ENCODE measurements at regions of chr18 and their contacts with region 1.

Region 1: DNA sequence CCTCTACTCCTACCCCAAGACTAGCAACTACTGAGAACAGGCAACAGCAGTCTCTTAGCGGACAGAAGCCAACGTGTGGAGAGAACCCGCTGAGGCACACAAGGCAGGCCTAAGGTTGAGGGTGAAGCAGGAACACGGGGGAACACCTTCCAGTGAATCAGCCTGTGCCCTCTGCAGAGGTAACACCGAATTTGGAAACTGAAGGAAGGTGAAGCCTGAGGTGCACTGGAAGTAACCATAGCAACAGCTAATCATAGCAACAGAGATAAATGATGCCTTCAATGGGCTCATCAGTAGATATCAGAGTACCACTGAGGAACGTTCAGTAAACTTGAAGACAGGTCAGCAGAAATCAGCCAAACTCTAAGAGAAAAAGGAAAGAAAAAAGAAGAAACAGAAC is 43.3 kb downstream of the OSBPL1A start:
- DNase-seq: no peak
- H3K4me3 Mint-ChIP-seq: no peak overlapping the region
- H3K27ac Mint-ChIP-seq: no peak overlapping the region
- H3K4me1 Mint-ChIP-seq: no peaks in the 10 kb centered on the region
- H3K27me3 Mint-ChIP-seq: no peaks in the 10 kb centered on the region
- CTCF ChIP-seq: no peak

Region 2: GRCh38 chr18:24333071-24333470 is 21.2 kb before region 1 on chr18:
- CTCF ChIA-PET with region 1: interaction called, 14 read pairs
- intact Hi-C with region 1: no loop called
- DNase-seq: no peak
- H3K4me3 Mint-ChIP-seq: no peak overlapping the region
- H3K27ac Mint-ChIP-seq: no peak overlapping the region
- H3K4me1 Mint-ChIP-seq: no peaks in the 10 kb centered on the region
- H3K27me3 Mint-ChIP-seq: no peaks in the 10 kb centered on the region
- CTCF ChIP-seq: no peak

Measured in Calu3 (cell line).